Left cardiac atrium (tissue), 4 donors: ENCODE measurements at regions of chr9 and their contacts with region 1.

Region 1: GRCh38 chr9:70602321-70603019 is 188.0 kb upstream of the KLF9 start:
- DNase-seq: peak; percentile 38
- ATAC-seq: peak; percentile 61 to 62

Region 2: DNA sequence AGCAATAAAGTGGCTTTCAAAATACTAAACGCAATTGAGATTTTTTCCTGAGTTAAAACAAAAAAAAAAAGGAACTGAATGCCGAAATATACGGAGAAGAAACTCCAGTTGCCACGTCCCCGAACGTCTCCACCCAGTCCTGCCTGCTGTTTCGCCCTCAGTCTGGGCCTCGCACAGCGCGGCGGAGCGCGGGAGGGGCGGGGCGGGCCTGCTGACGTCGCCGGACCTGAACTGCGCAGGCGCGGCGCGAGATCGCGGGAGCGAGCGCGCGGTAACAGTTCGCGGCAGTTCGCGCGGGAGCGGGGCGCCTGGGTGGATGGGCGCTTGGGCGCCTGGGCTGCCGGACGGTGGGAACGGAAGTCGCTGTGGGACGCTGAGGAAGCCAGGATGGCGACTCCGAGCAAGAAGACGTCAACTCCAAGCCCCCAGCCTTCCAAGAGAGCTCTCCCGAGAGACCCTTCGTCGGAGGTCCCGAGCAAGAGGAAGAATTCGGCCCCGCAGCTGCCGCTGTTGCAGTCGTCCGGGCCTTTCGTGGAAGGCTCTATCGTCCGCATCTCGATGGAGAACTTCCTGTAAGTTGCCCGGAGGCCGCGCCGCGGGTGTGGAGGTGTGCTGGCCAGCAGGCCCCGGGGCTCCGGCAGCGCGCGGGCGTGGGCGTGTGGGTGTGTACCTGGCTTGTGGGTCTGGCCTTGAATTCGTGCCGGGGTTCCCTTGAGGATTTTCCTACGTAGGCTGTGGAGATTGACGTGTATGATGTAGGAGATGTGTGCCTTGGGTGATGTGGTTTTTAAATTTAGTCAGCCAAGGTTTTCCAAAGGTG is 343.6 kb before region 1 on chr9 and contains the start of gene SMC5:
- intact Hi-C with region 1: loop called in 1 of 2 experiments (anchors 10 kb)
- DNase-seq: peak; percentile 92
- ATAC-seq: peak; percentile 96 to 97
- total RNA-seq, gene SMC5: 12.3 to 21.0 TPM

Region 3: DNA sequence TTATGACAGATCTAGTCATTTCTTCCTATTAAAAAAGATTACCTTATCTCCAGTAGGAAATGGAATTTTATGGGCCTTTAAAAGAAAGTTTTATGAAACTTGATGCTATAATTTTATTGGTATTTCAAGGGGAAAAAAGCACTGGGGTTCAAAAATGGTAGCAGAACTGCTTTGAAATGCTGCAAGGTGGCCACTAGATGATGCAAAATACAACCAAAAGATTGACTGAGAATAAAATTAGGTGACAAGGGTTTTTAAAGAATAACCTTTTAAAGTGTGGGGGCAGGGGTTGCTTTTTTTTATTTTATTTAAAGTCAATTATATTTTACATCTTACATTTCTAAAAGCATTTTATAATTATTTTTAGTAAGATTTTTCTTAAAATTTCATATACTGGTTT is 249.7 kb before region 1 on chr9:
- intact Hi-C with region 1: loop called (anchors 2 to 5 kb)
- DNase-seq: no peak
- ATAC-seq: peak in 1 of 2 donors; percentile 55

Region 4: DNA sequence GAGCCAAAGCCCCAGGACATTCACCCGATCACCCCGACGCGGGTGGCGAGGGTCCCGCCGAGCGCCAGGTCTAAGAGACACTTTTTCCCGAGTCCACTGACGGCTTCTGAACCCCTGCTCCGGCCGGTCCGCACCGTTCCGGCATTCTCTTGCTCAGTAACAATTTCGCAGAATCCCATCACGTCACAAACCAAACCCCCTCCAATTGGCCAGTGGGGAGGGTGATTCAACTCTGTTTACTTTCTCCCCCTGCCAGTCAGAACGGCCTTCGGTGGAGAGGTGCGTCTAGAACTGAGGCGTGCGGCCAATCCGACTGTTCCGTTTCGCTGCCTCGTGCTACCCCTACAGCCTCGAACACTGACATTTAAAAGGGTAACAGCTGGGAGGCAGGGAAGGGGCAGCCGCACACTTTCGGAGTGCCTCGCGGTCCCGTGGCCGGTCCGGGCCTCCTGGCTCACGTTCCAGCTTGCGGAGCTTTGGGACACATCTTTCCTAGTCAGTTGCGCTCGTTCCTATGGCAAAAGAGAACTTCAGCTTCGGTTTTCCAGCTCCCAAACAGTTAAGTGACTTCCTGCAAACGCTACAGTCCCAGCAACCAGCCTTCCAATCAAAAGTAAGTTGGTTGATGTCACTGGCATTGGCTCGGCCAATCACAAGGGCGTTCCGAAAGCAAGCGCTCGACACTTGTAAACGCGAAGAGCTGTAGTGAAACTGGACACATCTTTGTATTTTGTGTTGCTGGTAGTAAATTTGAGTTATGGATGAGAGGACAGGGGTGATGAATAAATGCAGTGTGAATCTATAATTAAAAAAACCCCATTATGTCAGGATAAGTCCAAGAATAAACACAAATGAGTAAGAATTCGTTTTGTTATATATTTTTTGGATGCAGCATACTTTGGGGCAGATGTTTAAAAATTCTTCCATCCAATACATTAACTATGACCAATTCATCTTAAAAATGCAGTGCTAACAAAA is 188.4 kb before region 1 on chr9 and contains the start of gene KLF9:
- intact Hi-C with region 1: loop called (anchors 2 to 10 kb)
- DNase-seq: peak; percentile 95
- ATAC-seq: peak; percentile 67 to 78
- total RNA-seq, gene KLF9: 56.2 to 78.9 TPM

Region 5: GRCh38 chr9:70419546-70420266 is 182.8 kb before region 1 on chr9:
- intact Hi-C with region 1: loop called (anchors 1 to 10 kb)
- DNase-seq: peak; percentile 97
- ATAC-seq: peak; percentile 72 to 74

Region 6: GRCh38 chr9:70484210-70485130 is 118.0 kb before region 1 on chr9:
- intact Hi-C with region 1: loop called in 1 of 2 experiments (anchors 2 kb)
- DNase-seq: no peak
- ATAC-seq: peak; percentile 67 to 75

Region 7: GRCh38 chr9:71136696-71137095 is 534.2 kb after region 1 on chr9:
- intact Hi-C with region 1: no loop called
- DNase-seq: no peak
- ATAC-seq: no peak